Activated CD8-positive, alpha-beta T cell treated with anti-CD3 and anti-CD28 coated beads, Interleukin-2, amount 10 ng/mL, durations not matched to agents 7 days and 5 days (primary cell): ENCODE measurements at regions of chr21 and their contacts with region 1.

Region 1: DNA sequence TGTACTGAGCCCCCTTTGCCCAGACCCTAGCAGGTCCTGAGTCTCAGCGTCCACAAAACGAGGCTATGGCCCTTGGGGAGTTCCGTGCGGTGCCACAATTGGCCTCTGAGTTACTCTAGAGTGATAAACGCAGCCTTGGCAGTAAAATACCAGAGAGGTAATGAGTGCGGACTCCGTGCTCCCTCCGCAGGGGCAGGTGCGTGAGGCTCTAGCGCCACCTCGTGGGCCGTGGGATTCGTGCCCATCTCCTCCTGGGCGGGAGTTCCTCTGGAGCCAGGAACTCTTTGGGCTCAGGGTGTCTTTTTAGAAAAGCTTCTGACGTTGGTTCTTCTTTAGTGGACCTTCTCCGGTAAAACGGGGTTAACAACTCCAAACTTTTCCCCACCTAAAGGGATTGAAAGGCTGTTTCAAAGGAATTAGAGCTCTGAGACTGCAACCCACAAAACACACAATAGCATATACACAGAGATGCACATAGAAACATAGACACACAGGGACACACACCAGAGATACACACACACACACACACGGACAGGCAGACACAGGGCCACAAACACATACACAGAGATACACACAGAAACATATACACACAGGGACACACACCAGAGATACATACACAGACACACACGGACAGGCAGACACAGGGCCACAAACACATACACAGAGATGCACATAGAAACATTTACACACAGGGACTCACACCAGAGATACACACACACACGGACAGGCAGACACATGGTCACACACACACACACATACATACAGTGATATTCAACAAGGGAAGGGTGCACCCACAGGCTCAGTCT is 99.4 kb downstream of the KCNJ15 start:
- DNase-seq: peak; percentile 76
- ATAC-seq: peak; percentile 75
- H3K4me3 Mint-ChIP-seq: no peak overlapping the region
- H3K27ac Mint-ChIP-seq: no peak overlapping the region
- H3K4me1 Mint-ChIP-seq: no peaks in the 10 kb centered on the region
- H3K27me3 Mint-ChIP-seq: peaks cover 5% of the 10 kb centered on the region

Region 2: DNA sequence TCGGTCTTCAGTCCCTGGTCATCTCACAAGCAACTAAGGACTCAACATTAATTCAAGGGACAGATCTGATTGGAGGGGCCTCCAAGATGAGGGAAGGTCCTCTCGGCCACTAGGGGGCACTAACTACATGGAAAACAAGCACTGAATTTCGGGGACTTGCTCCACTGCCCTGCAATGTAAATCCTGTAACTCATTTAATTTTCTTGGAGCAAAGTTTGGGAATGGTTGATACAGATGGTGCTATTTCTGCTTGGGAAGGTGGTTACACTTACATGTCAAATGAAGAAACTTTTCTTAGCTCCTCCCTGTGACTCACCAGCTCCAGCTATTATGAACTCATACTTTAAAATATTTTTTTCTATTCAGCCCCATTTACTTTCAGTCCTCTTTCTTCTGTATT is 196.8 kb before region 1 on chr21:
- CTCF ChIA-PET with region 1: interaction called, 24 read pairs
- POLR2A ChIA-PET with region 1: no interaction called
- DNase-seq: peak; percentile 66
- ATAC-seq: peak; percentile 51
- H3K4me3 Mint-ChIP-seq: no peak overlapping the region
- H3K27ac Mint-ChIP-seq: no peak overlapping the region
- H3K4me1 Mint-ChIP-seq: no peaks in the 10 kb centered on the region
- H3K27me3 Mint-ChIP-seq: peaks cover 10% of the 10 kb centered on the region

Region 3: DNA sequence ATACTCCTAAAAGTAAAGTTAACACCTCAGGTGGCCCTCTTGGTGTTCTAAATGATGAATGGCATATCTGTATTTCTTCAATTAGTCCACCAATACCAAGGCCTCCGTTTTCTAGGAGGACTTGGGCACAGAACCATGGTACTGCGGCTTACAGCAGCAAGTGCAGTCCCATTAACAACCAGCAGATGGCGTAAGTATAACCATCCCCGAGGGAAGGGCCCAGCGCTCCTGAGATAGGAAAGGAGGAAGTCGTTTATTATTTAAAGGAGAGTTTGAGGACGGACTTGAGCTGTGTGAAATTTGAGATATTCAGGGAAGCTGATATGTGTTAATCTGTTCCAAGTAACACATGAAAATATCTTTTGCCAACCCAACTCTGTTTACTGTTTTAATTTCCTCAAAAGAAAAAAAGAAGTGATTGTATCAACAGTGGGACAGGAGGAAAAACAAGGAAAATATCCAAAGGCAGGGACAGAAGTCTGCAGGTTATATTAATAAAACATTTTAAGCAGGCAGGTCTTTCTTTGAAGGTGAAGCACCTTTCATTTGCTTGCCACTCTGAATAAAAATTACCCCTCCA is 137.1 kb before region 1 on chr21:
- CTCF ChIA-PET with region 1: interaction called, 49 read pairs
- POLR2A ChIA-PET with region 1: no interaction called
- DNase-seq: peak; percentile 67
- ATAC-seq: peak; percentile 58
- H3K4me3 Mint-ChIP-seq: no peak overlapping the region
- H3K27ac Mint-ChIP-seq: no peak overlapping the region
- H3K4me1 Mint-ChIP-seq: no peaks in the 10 kb centered on the region
- H3K27me3 Mint-ChIP-seq: peaks cover 5% of the 10 kb centered on the region

Region 4: DNA sequence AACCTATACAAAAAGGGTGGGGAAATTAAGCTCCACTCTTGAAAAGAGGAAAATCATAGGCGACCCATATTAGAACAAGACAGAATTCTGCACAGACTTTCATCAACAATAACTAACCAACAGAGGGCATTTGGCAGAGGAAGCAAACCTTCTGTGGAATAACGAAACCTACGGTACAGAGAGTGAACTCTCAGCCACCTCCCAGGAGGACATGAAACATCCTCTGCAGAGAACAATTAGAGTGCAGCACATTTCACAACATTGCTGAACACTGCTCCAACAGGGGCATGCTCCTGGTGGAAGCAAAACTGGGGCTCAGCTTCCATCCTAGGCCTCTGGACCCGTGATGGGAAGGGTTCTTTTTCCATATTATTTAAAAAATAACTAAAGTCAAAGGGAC is 11.5 kb after region 1 on chr21:
- CTCF ChIA-PET with region 1: no interaction called
- POLR2A ChIA-PET with region 1: no interaction called
- DNase-seq: no peak
- ATAC-seq: no peak
- H3K4me3 Mint-ChIP-seq: no peak overlapping the region
- H3K27ac Mint-ChIP-seq: no peak overlapping the region
- H3K4me1 Mint-ChIP-seq: no peaks in the 10 kb centered on the region
- H3K27me3 Mint-ChIP-seq: peaks cover 6% of the 10 kb centered on the region

Region 5: DNA sequence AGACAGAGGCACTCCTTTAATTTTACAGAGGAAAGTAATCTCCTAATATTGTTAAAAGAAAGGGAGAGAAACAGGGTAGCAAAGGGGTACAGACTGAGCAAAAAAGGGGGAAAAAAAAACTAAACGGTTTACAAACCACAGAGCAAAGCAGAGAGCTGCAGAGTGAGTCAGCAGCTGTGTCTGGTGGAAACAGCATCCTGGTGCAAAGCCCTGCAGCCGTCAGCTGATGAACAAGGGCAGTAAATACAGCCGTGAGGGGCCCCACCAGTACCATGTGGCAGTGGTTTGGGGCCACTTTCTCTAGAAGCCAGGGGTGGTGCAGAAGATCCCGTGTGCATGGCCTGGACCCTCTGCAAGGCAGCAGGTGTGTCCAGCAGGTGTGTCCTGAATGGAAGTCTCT is 30.8 kb after region 1 on chr21:
- CTCF ChIA-PET with region 1: no interaction called
- POLR2A ChIA-PET with region 1: no interaction called
- DNase-seq: peak; percentile 42
- ATAC-seq: peak; percentile 49
- H3K4me3 Mint-ChIP-seq: no peak overlapping the region
- H3K27ac Mint-ChIP-seq: no peak overlapping the region
- H3K4me1 Mint-ChIP-seq: peaks cover 9% of the 10 kb centered on the region
- H3K27me3 Mint-ChIP-seq: peaks cover 13% of the 10 kb centered on the region

Region 6: GRCh38 chr21:38448677-38449385 is 92.6 kb after region 1 on chr21:
- CTCF ChIA-PET with region 1: no interaction called
- POLR2A ChIA-PET with region 1: no interaction called
- DNase-seq: no peak
- ATAC-seq: no peak
- H3K4me3 Mint-ChIP-seq: no peak overlapping the region
- H3K27ac Mint-ChIP-seq: no peak overlapping the region
- H3K4me1 Mint-ChIP-seq: no peaks in the 10 kb centered on the region
- H3K27me3 Mint-ChIP-seq: peaks cover 2% of the 10 kb centered on the region